ENCODE measurements at regions of chr6 and their contacts with region 1.

Region 1: GRCh38 chr6:32700391-32701040 is 34.1 kb upstream of the HLA-DQB1 start:
- DNase-seq: peak in 35 of 42 donors; percentile 3 to 76 (median 42)

Region 2: GRCh38 chr6:32424589-32425300 is 275.8 kb before region 1 on chr6:
- intact Hi-C with region 1: loop called (anchors 5 kb)
- DNase-seq: no peak

Measured in head of caudate nucleus (tissue), 42 donors.